ENCODE measurements at regions of chr6 and their contacts with region 1.

Region 1: GRCh38 chr6:63635588-63636517 is at the start of gene PHF3:
- DNase-seq: peak; percentile 85
- H3K4me3 ChIP-seq: peak within 1 kb of the TSS; percentile 89 to 94 (median 92)
- H3K27ac ChIP-seq: peak within 1 kb of the TSS; percentile 78
- H3K4me1 ChIP-seq: peaks cover 14% of the 10 kb centered on the region
- H3K27me3 ChIP-seq: no peaks in the 10 kb centered on the region
- CTCF ChIP-seq: peak in 1 of 2 donors; percentile 36
- total RNA-seq, gene PHF3: 35.2 to 41.5 TPM

Region 2: GRCh38 chr6:63714091-63714490 is 78.2 kb after region 1 on chr6:
- CTCF ChIA-PET with region 1: no interaction called
- dilution Hi-C with region 1: no loop called
- in situ Hi-C with region 1: no loop called
- intact Hi-C with region 1: loop called (anchors 5 kb)
- DNase-seq: no peak
- H3K4me3 ChIP-seq: no peak overlapping the region
- H3K27ac ChIP-seq: no peak overlapping the region
- H3K4me1 ChIP-seq: no peaks in the 10 kb centered on the region
- H3K27me3 ChIP-seq: no peaks in the 10 kb centered on the region
- CTCF ChIP-seq: no peak

Measured in mammary epithelial cell (primary cell).